ENCODE measurements at regions of chr3 and their contacts with region 1.

Region 1: GRCh38 chr3:139664958-139665357 is 12.8 kb downstream of the NMNAT3 start:
- DNase-seq: no peak
- H3K4me3 ChIP-seq: no peak overlapping the region
- CTCF ChIP-seq: no peak

Region 2: DNA sequence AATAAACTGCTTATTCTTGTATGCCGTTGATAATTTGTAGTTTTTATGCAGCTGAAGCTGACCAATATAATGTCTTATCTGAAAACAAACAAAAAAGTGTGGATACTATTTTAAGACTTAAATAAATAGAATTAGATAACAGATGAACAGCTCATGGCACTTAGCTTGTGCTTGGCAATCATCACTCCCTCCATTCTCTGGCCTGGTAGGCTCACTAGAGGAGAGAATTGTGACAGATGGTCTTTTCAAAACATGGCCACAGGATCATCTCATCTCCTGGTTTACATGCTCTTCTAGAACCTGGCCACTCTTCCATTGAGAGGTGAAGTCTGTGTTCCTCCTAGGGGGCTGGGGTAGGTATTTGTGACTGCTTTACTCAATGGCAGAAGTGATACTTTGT is 67.0 kb before region 1 on chr3:
- in situ Hi-C with region 1: loop called (anchors 5 kb)
- DNase-seq: no peak
- H3K4me3 ChIP-seq: no peak overlapping the region
- CTCF ChIP-seq: no peak

Measured in astrocyte of the cerebellum (primary cell).